AG04449 (cell line): ENCODE measurements at regions of chr7 and their contacts with region 1.

Region 1: DNA sequence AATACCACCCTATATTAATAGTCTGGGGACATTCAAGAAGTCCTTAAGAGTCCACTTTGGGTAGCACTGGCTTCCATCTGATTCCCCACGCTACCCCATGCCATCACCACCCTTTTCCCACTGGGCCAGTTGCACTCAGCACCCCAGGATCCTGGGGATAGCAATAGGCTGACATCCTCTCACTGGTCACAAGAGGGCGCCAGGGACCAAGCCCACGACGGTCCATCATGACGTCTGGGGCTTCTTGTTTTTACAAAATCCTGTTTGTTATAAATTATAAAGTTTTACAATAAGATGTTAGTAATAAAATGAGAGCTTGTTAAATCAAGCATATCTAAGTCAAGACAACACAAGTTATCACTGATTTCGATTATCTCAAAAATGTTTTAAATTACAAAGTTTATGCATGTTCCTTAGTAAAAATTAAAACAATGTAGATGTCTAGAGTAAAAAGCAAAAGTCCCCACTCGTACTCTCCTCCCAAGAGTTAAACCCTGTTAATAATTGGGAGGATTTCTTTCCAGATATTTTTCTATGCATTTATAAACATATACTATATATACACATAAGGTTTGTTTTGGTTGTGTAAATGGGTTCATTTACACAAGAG is 15.4 kb downstream of the GPNMB start:
- DNase-seq: no peak
- H3K4me3 ChIP-seq: no peak overlapping the region
- CTCF ChIP-seq: peak; percentile 89

Region 2: GRCh38 chr7:23100697-23101096 is 161.3 kb before region 1 on chr7:
- CTCF ChIA-PET with region 1: no interaction called
- POLR2A ChIA-PET with region 1: no interaction called
- DNase-seq: no peak
- H3K4me3 ChIP-seq: no peak overlapping the region
- CTCF ChIP-seq: no peak

Region 3: GRCh38 chr7:23181684-23182553 is 80.0 kb before region 1 on chr7 and contains the start of gene NUP42:
- CTCF ChIA-PET with region 1: interaction called, 54 read pairs
- POLR2A ChIA-PET with region 1: no interaction called
- DNase-seq: peak; percentile 96
- H3K4me3 ChIP-seq: peak within 1 kb of the TSS; percentile 97
- CTCF ChIP-seq: no peak

Region 4: DNA sequence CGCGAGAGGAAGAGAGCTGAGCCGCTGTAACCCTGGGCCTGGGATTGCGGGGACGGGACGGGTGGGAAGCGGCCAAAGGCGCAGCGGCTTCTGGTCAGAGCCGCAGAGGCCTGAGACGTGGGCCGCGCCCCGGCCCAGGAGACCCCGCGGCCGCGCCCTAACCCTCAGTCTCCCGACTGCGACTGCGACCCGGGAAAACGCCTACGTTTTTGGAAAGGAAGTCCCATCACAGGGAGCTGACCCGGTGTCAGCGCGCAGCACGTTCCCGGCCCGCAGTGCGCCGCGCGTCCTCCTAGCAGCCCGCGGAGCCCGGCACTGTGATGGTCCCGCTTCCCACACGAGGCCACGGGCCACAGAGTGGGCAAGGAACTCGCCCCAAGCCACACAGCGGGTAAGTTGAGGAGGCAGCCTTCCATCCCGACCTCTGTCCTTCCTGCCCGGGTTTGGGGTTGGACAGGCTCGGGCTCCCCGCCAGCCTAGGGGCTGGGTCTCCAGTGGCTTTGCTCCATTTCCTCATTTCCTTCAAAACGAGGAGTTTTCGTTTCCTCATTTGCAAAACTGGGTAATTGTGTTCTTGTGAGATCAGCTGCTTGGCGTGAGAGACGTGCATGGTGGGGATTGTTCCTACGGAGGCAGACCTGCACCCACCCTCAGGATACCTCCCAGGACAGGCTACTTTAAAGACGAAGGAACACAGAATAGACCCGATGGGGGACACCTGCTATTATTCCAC is 14.2 kb before region 1 on chr7:
- CTCF ChIA-PET with region 1: interaction called, 37 read pairs
- POLR2A ChIA-PET with region 1: interaction called, 3 read pairs
- DNase-seq: no peak
- H3K4me3 ChIP-seq: peak overlapping the region; percentile 57
- CTCF ChIP-seq: no peak

Region 5: GRCh38 chr7:23287612-23288011 is 25.7 kb after region 1 on chr7:
- CTCF ChIA-PET with region 1: no interaction called
- POLR2A ChIA-PET with region 1: no interaction called
- DNase-seq: no peak
- H3K4me3 ChIP-seq: no peak overlapping the region
- CTCF ChIP-seq: no peak